ENCODE measurements at regions of chr3 and their contacts with region 1.

Region 1: DNA sequence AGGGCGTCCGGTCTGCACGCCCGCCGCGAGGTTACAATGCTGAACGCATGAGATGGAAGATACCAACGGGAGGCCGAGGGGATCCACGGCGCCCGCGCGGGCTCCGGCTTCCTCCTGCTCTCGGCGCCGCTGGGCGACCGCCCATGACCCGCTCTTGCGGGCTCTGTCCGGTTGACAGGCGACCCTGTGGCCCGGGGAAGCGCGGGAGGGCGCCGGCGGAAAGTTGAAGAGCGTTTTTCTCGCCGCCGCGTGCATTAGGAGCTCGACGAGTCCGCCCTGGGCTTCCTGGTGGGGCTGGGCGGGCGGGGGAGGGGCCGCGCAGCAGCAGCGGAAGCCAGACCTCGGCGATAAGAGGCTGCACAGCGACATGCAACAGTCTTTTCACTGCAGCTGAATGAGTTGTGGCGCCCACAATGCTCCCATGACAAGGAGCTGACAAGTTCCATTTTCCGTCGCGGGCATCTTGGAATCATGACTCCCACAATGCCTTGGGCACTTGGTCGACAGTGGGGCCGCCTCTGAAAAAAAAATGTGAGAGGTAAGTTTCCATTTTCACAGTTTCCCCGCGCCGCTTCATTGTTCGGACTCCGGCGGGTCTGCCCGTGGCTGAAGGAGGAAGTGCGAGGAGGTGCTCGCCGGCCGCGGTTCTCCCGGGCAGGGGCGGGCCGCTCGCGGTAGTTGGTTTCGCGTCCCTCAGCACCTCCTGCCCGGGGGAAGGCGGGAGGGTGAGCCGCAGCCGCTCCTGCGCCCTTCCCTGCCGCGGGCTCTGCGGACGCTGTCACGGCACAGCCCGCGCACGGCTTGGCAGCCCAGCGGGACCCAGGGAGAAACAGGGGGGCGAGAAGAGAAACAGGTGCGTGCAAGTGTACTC is at the start of gene MBNL1:
- DNase-seq: peak; percentile 65 to 89 (median 87)
- ATAC-seq: peak; percentile 77
- H3K4me3 ChIP-seq: peak within 1 kb of the TSS; percentile 77
- H3K4me3 Mint-ChIP-seq: peak within 1 kb of the TSS; percentile 78 to 100 (median 94)
- H3K27ac ChIP-seq: peak within 1 kb of the TSS; percentile 99
- H3K27ac Mint-ChIP-seq: peak within 1 kb of the TSS; percentile 88 to 98 (median 95)
- H3K4me1 ChIP-seq: peaks cover 34 to 46% of the 10 kb centered on the region in 2 donors
- H3K4me1 Mint-ChIP-seq: peaks cover 46 to 69% (median 64%) of the 10 kb centered on the region in 7 donors
- H3K27me3 ChIP-seq: no peaks in the 10 kb centered on the region
- H3K27me3 Mint-ChIP-seq: no peaks in the 10 kb centered on the region
- total RNA-seq, gene MBNL1: 459 to 675 (median 508) TPM

Region 2: GRCh38 chr3:150603153-150603979 is 1665.4 kb before region 1 on chr3 and contains the start of gene SELENOT:
- CTCF ChIA-PET with region 1: no interaction called
- POLR2A ChIA-PET with region 1: no interaction called
- intact Hi-C with region 1: loop called in 1 of 2 experiments (anchors 2 kb)
- DNase-seq: peak; percentile 91 to 97 (median 96)
- ATAC-seq: peak; percentile 89
- H3K4me3 ChIP-seq: peak within 1 kb of the TSS; percentile 76
- H3K4me3 Mint-ChIP-seq: peak within 1 kb of the TSS; percentile 93 to 100 (median 98)
- H3K27ac ChIP-seq: peak within 1 kb of the TSS; percentile 90
- H3K27ac Mint-ChIP-seq: peak within 1 kb of the TSS; percentile 97 to 100 (median 99)
- H3K4me1 ChIP-seq: peaks cover 27 to 41% of the 10 kb centered on the region in 2 donors
- H3K4me1 Mint-ChIP-seq: peaks cover 43 to 78% (median 70%) of the 10 kb centered on the region in 7 donors
- H3K27me3 ChIP-seq: no peaks in the 10 kb centered on the region
- H3K27me3 Mint-ChIP-seq: no peaks in the 10 kb centered on the region
- total RNA-seq, gene SELENOT: 51.3 to 104 (median 78.1) TPM

Region 3: GRCh38 chr3:152183473-152183872 is 85.3 kb before region 1 on chr3:
- CTCF ChIA-PET with region 1: interaction called, 14 read pairs
- POLR2A ChIA-PET with region 1: interaction called, 135 read pairs
- intact Hi-C with region 1: loop called in 1 of 2 experiments (anchors 1 kb)
- DNase-seq: peak in 7 of 9 donors; percentile 41 to 64 (median 55)
- ATAC-seq: peak; percentile 83
- H3K4me3 ChIP-seq: no peak overlapping the region
- H3K4me3 Mint-ChIP-seq: peak overlapping the region; percentile 40 to 74 (median 52)
- H3K27ac ChIP-seq: no peak overlapping the region
- H3K27ac Mint-ChIP-seq: peak overlapping the region in 8 of 9 donors; percentile 48 to 89 (median 70)
- H3K4me1 ChIP-seq: peaks cover 13 to 34% of the 10 kb centered on the region in 2 donors
- H3K4me1 Mint-ChIP-seq: peaks cover 39 to 82% (median 76%) of the 10 kb centered on the region in 7 donors
- H3K27me3 ChIP-seq: no peaks in the 10 kb centered on the region
- H3K27me3 Mint-ChIP-seq: no peaks in the 10 kb centered on the region

Region 4: GRCh38 chr3:152213203-152213602 is 55.6 kb before region 1 on chr3:
- CTCF ChIA-PET with region 1: interaction called, 3 read pairs
- POLR2A ChIA-PET with region 1: interaction called, 66 read pairs
- intact Hi-C with region 1: no loop called
- DNase-seq: no peak
- ATAC-seq: no peak
- H3K4me3 ChIP-seq: peak overlapping the region; percentile 19
- H3K4me3 Mint-ChIP-seq: peak overlapping the region in 4 of 10 donors; percentile 0 to 45 (median 28)
- H3K27ac ChIP-seq: peak overlapping the region; percentile 25
- H3K27ac Mint-ChIP-seq: peak overlapping the region in 8 of 9 donors; percentile 10 to 100 (median 64)
- H3K4me1 ChIP-seq: peaks cover 10 to 38% of the 10 kb centered on the region in 2 donors
- H3K4me1 Mint-ChIP-seq: peaks cover 43 to 83% (median 70%) of the 10 kb centered on the region in 7 donors
- H3K27me3 ChIP-seq: no peaks in the 10 kb centered on the region
- H3K27me3 Mint-ChIP-seq: no peaks in the 10 kb centered on the region

Region 5: DNA sequence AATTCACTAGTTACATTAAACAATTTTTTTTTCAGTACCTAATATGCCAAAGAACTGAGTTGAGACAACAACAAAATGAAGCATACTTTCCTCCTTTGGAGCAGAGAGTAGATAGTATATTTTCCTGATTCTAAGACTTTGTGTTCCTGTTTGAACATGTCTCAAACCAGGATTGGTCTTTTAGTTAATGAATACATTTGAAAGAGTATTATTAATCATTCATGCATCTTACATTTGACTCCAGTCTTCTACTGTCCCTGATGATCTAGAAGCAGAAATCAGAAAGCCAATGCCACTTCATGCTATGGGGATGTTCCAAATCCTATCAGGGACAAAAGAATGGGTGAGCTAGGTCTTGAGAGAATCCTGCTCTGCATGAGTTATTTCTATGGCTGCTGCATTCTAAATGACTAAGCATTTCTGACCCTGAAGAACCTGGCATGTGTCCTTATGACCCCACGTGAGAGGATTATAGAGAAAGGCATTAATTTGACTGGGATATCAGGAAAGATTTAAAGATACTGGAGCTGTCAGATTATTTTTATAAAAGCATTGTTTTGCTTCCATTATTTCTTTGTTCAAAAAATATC is 33.0 kb before region 1 on chr3:
- CTCF ChIA-PET with region 1: interaction called, 3 read pairs
- POLR2A ChIA-PET with region 1: interaction called, 252 read pairs
- intact Hi-C with region 1: no loop called
- DNase-seq: no peak
- ATAC-seq: no peak
- H3K4me3 ChIP-seq: no peak overlapping the region
- H3K4me3 Mint-ChIP-seq: peak overlapping the region in 8 of 10 donors; percentile 7 to 65 (median 56)
- H3K27ac ChIP-seq: peak overlapping the region; percentile 29
- H3K27ac Mint-ChIP-seq: peak overlapping the region in 8 of 9 donors; percentile 74 to 90 (median 85)
- H3K4me1 ChIP-seq: peaks cover 13 to 64% of the 10 kb centered on the region in 2 donors
- H3K4me1 Mint-ChIP-seq: peaks cover 31 to 97% (median 91%) of the 10 kb centered on the region in 7 donors
- H3K27me3 ChIP-seq: no peaks in the 10 kb centered on the region
- H3K27me3 Mint-ChIP-seq: no peaks in the 10 kb centered on the region

Region 6: GRCh38 chr3:152281133-152281713 is 12.4 kb after region 1 on chr3:
- CTCF ChIA-PET with region 1: interaction called, 3 read pairs
- POLR2A ChIA-PET with region 1: interaction called, 46 read pairs
- intact Hi-C with region 1: loop called (anchors 1 kb)
- DNase-seq: no peak
- ATAC-seq: peak; percentile 12
- H3K4me3 ChIP-seq: peak overlapping the region; percentile 18
- H3K4me3 Mint-ChIP-seq: peak overlapping the region; percentile 64 to 79 (median 72)
- H3K27ac ChIP-seq: peak overlapping the region; percentile 49
- H3K27ac Mint-ChIP-seq: peak overlapping the region; percentile 6 to 94 (median 73)
- H3K4me1 ChIP-seq: peaks cover 47 to 86% of the 10 kb centered on the region in 2 donors
- H3K4me1 Mint-ChIP-seq: peaks cover 55 to 95% (median 85%) of the 10 kb centered on the region in 7 donors
- H3K27me3 ChIP-seq: no peaks in the 10 kb centered on the region
- H3K27me3 Mint-ChIP-seq: no peaks in the 10 kb centered on the region

Region 7: DNA sequence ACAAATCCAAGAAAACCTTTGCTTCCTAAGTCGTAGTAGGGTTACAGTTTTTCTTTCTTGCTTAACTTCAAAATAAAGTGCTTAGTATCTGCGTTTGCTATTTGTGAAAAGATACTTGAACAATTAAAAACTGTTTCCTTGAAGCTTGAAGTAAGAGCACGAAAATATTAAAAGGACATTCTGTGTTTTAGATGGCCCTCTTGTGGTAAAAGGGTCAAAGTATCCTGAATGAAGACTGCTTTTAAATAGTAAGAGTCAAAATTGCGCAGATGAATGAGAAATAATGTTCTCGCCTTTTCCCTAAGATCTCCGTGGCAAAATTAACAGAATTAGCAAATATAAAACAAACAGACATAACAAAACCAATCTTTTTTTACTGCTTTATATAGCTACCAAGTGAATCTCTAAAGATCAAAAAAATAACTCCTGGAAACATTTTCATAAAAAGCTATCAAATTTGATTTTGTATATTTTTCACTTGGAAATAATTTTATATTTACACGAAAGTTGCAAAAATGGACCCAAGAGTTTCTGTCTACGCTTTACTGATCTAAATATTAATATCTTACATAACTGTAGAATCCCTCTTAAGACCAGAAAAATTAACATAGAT is 175.3 kb after region 1 on chr3:
- CTCF ChIA-PET with region 1: interaction called, 3 read pairs
- POLR2A ChIA-PET with region 1: interaction called, 5 read pairs
- intact Hi-C with region 1: loop called in 1 of 2 experiments (anchors 1 kb)
- DNase-seq: peak in 5 of 9 donors; percentile 31 to 42 (median 36)
- ATAC-seq: peak; percentile 60
- H3K4me3 ChIP-seq: no peak overlapping the region
- H3K4me3 Mint-ChIP-seq: peak overlapping the region in 6 of 10 donors; percentile 0 to 45 (median 26)
- H3K27ac ChIP-seq: peak overlapping the region; percentile 50
- H3K27ac Mint-ChIP-seq: peak overlapping the region; percentile 2 to 68 (median 56)
- H3K4me1 ChIP-seq: peaks cover 24 to 27% of the 10 kb centered on the region in 2 donors
- H3K4me1 Mint-ChIP-seq: peaks cover 49 to 90% (median 78%) of the 10 kb centered on the region in 7 donors
- H3K27me3 ChIP-seq: no peaks in the 10 kb centered on the region
- H3K27me3 Mint-ChIP-seq: no peaks in the 10 kb centered on the region